A549 (cell line): ENCODE measurements at regions of chr9 and their contacts with region 1.

Region 1: GRCh38 chr9:113591001-113591898 is 127.7 kb downstream of the RGS3 start:
- DNase-seq: peak; percentile 72 to 77
- ATAC-seq: peak; percentile 57 to 68
- H3K4me3 ChIP-seq: no peak overlapping the region
- H3K27ac ChIP-seq: peak overlapping the region; percentile 28 to 53; a peak in 4 of 6 replicates
- H3K4me1 ChIP-seq: peaks cover 21% of the 10 kb centered on the region
- CTCF ChIP-seq: peak; percentile 96
- EP300 ChIP-seq: no peak
- POLR2A ChIP-seq: no peak
- RAD21 ChIP-seq: peak; percentile 98

Region 2: DNA sequence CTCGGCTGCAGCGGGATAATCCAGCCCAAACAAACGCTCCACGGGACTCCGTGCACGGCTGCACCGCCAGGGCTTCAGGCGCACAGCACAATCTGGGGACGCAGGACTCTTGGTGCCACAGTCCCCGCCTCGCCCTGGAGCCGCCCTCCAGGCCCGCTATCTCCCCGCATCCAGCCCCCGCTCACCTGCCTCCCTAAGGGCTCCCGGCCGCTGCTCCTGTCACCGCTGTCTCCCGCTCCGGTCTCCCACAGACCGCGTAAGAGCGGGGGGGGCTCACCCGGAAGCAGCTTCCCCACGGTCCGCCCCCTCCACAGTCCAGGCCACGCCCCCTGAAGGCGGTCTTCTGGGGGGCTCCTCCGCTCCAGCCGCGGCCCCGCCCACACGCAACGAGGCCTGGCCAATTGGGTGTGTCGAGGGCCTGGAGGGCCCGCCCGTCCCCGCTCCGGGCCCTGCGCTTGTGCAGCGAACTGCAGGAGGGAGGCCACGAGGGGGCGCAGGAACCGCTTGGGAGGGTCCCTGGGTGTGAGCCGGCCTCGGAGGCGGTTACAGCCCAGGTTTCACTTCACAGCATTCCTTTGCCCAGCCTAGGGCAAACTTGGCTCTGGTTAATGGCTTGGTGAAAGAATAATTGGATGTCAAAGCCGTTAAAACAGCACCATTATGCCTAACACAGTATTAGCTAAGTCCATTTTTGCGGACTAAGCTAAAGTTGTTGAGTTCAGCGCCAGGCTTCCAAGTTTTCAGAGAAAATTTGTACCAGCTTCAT is 190.0 kb before region 1 on chr9 and contains the start of gene ALAD:
- CTCF ChIA-PET with region 1: interaction called, 10 read pairs
- POLR2A ChIA-PET with region 1: no interaction called
- DNase-seq: peak; percentile 93 to 98
- ATAC-seq: peak; percentile 97 to 98
- H3K4me3 ChIP-seq: peak within 1 kb of the TSS; percentile 73
- H3K27ac ChIP-seq: peak within 1 kb of the TSS; percentile 66 to 85
- H3K4me1 ChIP-seq: peaks cover 10% of the 10 kb centered on the region; the same call in 1 of the 3 replicates
- CTCF ChIP-seq: peak; percentile 85
- EP300 ChIP-seq: no peak
- POLR2A ChIP-seq: peak; percentile 60
- RAD21 ChIP-seq: peak; percentile 49 to 66
- polyA plus RNA-seq, gene ALAD: 5.7 and 9.5 TPM in 2 replicates

Region 3: DNA sequence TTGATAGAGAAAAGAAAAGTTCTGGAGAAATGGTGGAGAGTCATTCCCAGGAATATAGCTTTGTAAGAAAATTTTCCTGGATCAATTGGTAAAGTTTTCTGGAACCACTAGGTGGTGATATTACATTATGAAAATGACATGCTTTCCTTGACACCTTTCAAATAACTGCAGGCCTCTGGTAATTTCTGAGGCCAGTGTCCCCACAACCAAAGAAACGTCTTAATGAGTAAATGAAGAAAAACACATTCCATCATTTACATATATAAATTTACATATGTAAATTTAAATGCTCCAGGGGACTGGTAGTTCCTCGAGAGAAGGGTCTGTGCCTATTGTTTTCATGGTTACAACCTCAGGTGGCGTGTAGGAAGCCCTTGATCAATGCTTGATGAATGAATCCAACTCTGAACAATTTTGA is 144.9 kb before region 1 on chr9:
- CTCF ChIA-PET with region 1: interaction called, 390 read pairs
- POLR2A ChIA-PET with region 1: interaction called, 3 read pairs
- DNase-seq: peak; percentile 52 to 77
- ATAC-seq: peak; percentile 50 to 79; a peak in 4 of 6 replicates
- H3K4me3 ChIP-seq: no peak overlapping the region
- H3K27ac ChIP-seq: no peak overlapping the region
- H3K4me1 ChIP-seq: no peaks in the 10 kb centered on the region
- CTCF ChIP-seq: peak; percentile 91
- EP300 ChIP-seq: no peak
- POLR2A ChIP-seq: no peak
- RAD21 ChIP-seq: peak; percentile 86 to 93

Region 4: DNA sequence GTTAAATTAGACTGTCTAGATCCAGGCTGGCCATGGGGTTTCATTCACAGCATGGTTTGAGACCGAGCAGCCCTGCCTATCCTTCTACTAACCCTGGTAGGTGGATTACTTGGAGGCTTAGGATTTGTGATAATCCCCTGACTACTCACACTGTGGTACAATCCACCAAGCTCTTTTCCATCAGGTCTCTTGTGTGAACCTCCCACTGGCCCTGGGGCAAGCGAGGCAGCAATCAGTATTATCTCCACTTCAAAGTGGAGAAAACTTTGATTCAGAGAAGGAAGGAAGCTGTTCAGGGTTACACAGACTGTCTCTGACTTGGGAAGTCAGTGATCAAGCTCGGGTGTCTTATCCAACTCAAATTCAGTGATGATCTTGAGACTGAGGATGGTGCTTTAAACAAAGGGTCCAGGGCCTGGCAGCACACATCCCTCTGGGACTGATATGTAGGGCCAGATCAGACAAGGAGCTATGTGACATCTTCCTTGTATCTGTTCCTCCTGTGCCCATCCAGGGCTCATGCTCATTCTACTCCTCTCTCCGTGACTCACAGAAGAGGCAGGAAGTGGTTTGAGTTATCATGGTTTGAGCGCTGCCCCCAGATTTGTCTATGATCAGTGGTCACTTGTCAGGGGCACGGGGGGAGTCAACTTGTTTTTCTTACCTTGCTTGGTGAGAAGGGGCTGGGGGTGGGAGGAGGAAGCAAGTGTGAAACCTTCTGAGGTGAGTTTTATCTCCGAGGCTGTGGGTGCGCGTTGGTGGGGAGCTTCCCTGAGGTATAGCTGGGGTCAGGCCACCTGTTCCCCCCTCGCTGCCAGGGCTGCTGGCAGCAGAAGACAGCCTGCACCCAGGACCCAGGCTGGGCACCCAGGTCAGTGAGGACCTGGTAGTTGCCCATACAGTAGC is 79.1 kb before region 1 on chr9:
- CTCF ChIA-PET with region 1: interaction called, 17 read pairs
- POLR2A ChIA-PET with region 1: no interaction called
- DNase-seq: no peak
- ATAC-seq: no peak
- H3K4me3 ChIP-seq: no peak overlapping the region
- H3K27ac ChIP-seq: no peak overlapping the region
- H3K4me1 ChIP-seq: peaks cover 19% of the 10 kb centered on the region; the same call in 2 of the 3 replicates
- CTCF ChIP-seq: no peak
- EP300 ChIP-seq: no peak
- POLR2A ChIP-seq: no peak
- RAD21 ChIP-seq: no peak

Region 5: GRCh38 chr9:113558632-113559502 is 32.4 kb before region 1 on chr9:
- CTCF ChIA-PET with region 1: interaction called, 40 read pairs
- POLR2A ChIA-PET with region 1: no interaction called
- DNase-seq: no peak
- ATAC-seq: peak in 1 of 2 experiments; percentile 55; a peak in 3 of 6 replicates
- H3K4me3 ChIP-seq: no peak overlapping the region
- H3K27ac ChIP-seq: peak overlapping the region in 1 of 2 experiments; percentile 57; a peak in 4 of 6 replicates
- H3K4me1 ChIP-seq: peaks cover 17% of the 10 kb centered on the region
- CTCF ChIP-seq: no peak
- EP300 ChIP-seq: no peak
- POLR2A ChIP-seq: no peak
- RAD21 ChIP-seq: no peak

Region 6: GRCh38 chr9:113622600-113623400 is 31.6 kb after region 1 on chr9:
- CTCF ChIA-PET with region 1: interaction called, 33 read pairs
- POLR2A ChIA-PET with region 1: no interaction called
- DNase-seq: peak; percentile 60 to 74
- ATAC-seq: peak; percentile 80 to 82
- H3K4me3 ChIP-seq: no peak overlapping the region
- H3K27ac ChIP-seq: peak overlapping the region; percentile 30 to 77; a peak in 5 of 6 replicates
- H3K4me1 ChIP-seq: peaks cover 43% of the 10 kb centered on the region
- CTCF ChIP-seq: no peak
- EP300 ChIP-seq: no peak
- POLR2A ChIP-seq: no peak
- RAD21 ChIP-seq: no peak